Activated T-helper 2 cell treated with anti-CD3 and anti-CD28 coated beads, Interferon-gamma antibody, Interleukin-2, Interleukin-4, amounts not matched to agents 10 μg/mL and 5 μg/mL and 100 μg/mL, durations not matched to agents 14 hours and 24 hours and 36 hours (primary cell): ENCODE measurements at regions of chr12 and their contacts with region 1.

Region 1: DNA sequence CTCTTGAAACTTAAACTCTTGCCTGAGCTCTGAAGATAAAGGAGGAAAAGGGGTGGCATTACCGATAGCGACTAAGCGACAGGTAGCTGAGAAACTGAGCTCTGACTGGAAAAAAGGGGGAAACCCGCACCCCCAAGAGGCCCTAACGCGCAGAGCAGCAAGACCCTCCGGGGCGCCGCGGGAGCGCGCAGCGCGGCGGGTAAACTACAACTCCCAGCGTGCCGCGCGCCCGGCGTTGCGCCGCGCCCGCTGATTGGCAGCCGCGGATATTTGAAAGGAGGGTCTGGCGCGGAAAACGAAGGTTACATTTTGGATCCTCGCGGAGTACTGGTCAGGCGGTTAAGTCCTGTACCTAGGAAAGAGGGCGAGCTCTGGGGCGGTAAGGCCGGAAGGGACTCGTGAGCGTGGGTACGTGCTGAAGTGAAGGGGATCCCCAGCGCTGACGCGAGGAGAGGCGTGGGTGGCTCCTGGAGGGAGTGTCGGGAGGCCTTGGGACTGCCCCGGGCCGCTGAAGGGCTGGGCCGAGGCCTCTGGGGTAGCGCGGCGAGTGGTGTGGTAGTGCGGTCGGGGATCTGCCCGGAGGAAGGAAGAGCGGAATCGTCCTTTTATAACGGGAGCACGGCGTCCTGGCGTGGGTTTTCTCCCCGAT is at the start of gene ESPL1:
- DNase-seq: peak; percentile 79
- H3K4me3 Mint-ChIP-seq: peak within 1 kb of the TSS; percentile 92
- H3K27ac Mint-ChIP-seq: peak within 1 kb of the TSS; percentile 91
- H3K4me1 Mint-ChIP-seq: peaks cover 34% of the 10 kb centered on the region
- H3K27me3 Mint-ChIP-seq: no peaks in the 10 kb centered on the region
- total RNA-seq, gene ESPL1: 72.6 and 75.3 TPM in 2 replicates

Region 2: DNA sequence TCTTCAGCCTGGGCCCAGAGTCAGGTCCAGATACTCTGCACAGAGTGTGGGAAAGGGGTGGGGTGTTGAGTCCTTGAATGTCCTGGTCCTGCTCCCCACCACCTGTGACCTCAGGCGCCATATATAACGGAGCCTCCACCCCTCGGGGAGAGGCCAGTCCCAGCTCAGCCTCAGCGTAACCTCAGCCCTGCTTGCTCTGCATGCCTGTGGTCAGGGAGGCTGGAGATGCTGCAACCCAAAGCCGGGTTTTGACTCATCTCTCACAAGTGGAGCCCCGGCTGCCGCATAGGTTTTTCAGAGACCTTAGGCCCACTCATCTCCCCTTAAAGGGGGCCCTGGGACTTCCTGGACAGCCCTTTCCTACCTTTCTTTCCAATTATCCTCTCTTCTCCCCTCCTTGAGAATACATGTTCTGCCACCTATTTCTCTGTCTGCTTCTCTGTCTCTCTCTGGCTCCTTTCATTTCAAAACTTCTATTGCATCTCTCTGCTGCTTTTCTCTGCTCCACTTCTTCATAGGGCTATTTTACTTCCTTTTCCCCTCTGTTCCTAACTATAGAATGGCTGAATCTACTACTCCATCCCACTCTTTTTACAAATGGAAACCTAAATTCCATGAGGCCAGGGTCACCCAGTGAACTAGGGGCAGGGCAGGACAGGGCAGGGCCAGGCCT is 62.2 kb before region 1 on chr12:
- intact Hi-C with region 1: loop called (anchors 1 kb)
- DNase-seq: peak; percentile 75
- H3K4me3 Mint-ChIP-seq: peak overlapping the region; percentile 82
- H3K27ac Mint-ChIP-seq: peak overlapping the region; percentile 66
- H3K4me1 Mint-ChIP-seq: peaks cover 56% of the 10 kb centered on the region
- H3K27me3 Mint-ChIP-seq: no peaks in the 10 kb centered on the region